Heart right ventricle (tissue), 16 donors: ENCODE measurements at regions of chr1 and their contacts with region 1.

Region 1: DNA sequence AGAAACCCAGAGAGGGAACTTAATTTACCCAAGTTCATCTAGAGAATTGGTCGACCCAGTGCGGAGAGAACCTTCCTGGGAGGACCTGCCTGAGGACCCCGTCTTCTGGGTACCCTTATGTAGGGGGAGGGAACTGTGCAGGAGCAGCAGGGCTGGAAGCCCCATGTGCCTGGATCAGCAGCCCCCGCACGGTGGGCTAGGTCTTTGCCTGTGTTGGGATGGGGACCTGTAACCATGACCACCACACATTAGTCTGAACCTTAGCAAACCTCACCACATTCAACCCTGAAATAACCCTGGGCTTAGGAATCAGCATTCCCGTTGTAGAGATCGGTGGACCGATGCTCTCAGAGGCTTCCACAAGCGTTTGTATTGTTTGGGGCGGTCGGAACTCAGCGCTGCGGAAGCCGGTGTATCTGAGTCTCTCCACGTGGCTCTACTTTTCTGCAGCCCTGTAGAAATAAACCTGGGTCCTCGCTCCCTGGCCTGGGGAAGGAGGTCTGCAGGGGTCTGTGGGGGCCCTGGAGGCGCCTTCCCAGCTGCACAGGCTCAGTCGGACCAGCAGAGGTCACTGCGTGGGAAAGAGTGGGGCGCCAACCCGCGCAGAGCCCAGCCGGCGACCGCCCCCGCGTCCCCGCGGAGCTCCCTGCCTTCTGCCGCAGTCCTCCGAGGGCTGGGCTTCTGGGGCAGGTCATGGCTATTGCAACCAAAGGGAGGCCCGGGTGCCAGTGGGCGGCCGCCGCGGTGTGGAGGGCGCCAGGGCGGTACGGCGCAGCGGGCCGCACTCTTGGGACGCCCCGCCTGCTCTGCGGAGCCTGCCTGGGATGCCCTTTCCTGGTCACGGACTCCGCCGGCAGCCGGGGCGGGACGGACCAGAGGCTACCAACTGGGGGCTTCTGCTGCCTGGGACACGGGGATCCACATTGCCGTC is 36.2 kb upstream of the KCNA10 start:
- DNase-seq: peak; percentile 44 to 65
- ATAC-seq: peak; percentile 81 to 93 (median 84)
- H3K4me3 ChIP-seq: peak overlapping the region in 9 of 10 donors; percentile 12 to 55 (median 52)
- H3K27ac ChIP-seq: peak overlapping the region in 3 of 10 donors; percentile 2 to 56 (median 23)
- H3K4me1 ChIP-seq: peaks cover 0 to 24% (median 12%) of the 10 kb centered on the region in 9 donors
- H3K27me3 ChIP-seq: peaks cover 0 to 69% (median 43%) of the 10 kb centered on the region in 7 donors
- CTCF ChIP-seq: peak; percentile 44 to 89 (median 79)

Region 2: DNA sequence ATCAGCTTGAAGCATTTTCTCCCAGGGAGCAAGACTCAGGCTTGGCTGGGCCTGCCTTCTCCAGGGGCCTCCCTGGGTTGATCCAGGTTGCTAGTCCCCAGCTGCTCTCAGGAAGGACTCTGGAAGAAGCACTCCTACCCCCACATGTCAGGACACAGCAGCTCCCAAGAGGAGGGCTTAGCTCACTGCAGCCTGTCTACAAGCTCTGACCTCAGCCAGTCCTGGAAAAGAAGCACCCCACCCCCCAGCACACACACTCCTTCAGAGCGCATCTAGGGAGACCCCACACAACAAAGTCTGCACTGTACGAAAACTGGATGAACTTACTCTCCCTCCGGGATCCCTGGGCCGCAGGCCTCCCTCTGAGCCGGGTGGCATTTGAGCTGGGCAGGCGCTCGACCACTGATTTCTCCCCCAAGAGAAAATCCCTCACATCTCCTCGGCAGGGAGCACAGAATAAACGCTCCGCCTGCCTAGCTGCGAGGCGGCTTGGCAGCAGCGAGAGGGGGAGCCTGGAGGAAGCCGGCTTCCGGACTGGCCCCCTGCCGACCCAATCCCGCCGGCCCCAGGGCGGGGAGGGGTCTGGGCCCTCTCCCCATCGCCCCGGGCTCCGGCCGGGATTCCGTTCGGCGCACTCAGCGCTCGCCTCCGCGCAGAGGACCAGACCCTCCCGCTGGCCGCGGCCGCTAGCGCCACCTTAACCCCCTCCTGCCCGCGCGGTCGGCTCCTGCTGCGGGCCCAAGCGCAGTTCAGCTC is 50.9 kb after region 1 on chr1 and contains the start of gene KCNA2:
- intact Hi-C with region 1: loop called in 3 of 10 experiments (anchors 5 to 10 kb)
- DNase-seq: peak; percentile 55 to 61
- ATAC-seq: peak; percentile 69 to 82 (median 78)
- H3K4me3 ChIP-seq: peak within 1 kb of the TSS; percentile 54 to 68 (median 58)
- H3K27ac ChIP-seq: peak within 1 kb of the TSS in 7 of 10 donors; percentile 13 to 55 (median 36)
- H3K4me1 ChIP-seq: peaks cover 10 to 34% (median 22%) of the 10 kb centered on the region in 9 donors
- H3K27me3 ChIP-seq: peaks cover 11 to 93% (median 66%) of the 10 kb centered on the region in 7 donors
- CTCF ChIP-seq: no peak
- total RNA-seq, gene KCNA2: 0.47 to 1.6 (median 0.80) TPM

Region 3: GRCh38 chr1:110612065-110612751 is 57.1 kb after region 1 on chr1:
- intact Hi-C with region 1: loop called (anchors 1 to 10 kb)
- DNase-seq: no peak
- ATAC-seq: no peak
- H3K4me3 ChIP-seq: no peak overlapping the region
- H3K27ac ChIP-seq: no peak overlapping the region
- H3K4me1 ChIP-seq: peaks cover 0 to 7% (median 5%) of the 10 kb centered on the region in 9 donors
- H3K27me3 ChIP-seq: peaks cover 7 to 78% (median 62%) of the 10 kb centered on the region in 7 donors
- CTCF ChIP-seq: no peak

Region 4: DNA sequence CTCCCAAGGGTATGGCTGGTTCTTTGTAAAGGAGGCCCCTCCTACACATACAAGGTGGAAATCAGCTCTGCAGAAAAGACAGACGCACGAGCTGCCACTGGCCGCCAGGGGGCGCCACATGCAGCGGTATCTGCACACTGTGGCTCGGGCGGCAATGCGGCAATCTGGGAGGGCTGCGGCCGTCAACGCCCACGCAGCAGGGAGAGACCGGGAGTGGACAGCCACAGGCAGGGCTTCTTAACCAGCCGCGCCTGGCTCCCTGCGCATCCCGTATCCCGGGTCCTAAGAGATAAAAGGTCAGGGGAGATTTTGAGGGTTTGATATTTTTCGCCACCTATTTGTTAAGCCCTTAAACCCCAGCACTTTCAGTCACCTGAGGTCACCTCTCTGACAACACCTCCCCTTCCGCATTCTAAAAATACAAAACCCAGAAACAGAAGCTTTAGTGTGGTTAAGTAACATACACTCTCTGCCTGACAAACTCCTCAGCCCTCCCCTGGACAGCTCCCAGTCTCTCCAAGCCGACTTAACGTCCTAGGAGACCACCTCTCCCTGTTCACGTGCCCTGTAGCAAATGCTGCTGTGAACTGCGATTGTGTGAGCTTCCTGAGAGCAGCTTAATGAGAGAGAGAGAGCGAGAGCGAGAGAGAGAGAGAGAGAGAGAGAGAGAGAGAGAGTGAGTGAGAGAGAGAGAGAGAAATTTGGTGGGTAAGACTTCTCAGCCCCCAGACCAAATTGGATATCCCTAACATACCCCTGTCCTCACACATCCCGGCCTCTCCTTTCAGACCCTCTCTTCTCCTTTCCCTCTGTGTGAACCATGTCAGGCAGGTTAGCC is 64.5 kb after region 1 on chr1:
- intact Hi-C with region 1: loop called in 9 of 10 experiments (anchors 1 to 10 kb)
- DNase-seq: peak; percentile 83
- ATAC-seq: peak; percentile 76 to 95 (median 91)
- H3K4me3 ChIP-seq: peak overlapping the region in 3 of 10 donors; percentile 1 to 46 (median 15)
- H3K27ac ChIP-seq: peak overlapping the region in 1 of 10 donors; percentile 52
- H3K4me1 ChIP-seq: peaks cover 0 to 11% (median 9%) of the 10 kb centered on the region in 9 donors
- H3K27me3 ChIP-seq: peaks cover 3 to 51% (median 41%) of the 10 kb centered on the region in 7 donors
- CTCF ChIP-seq: peak; percentile 90 to 97 (median 95)

Region 5: GRCh38 chr1:110780600-110781484 is 225.7 kb after region 1 on chr1:
- intact Hi-C with region 1: loop called in 5 of 10 experiments (anchors 5 to 10 kb)
- DNase-seq: peak; percentile 38 to 54
- ATAC-seq: peak; percentile 43 to 72 (median 60)
- H3K4me3 ChIP-seq: no peak overlapping the region
- H3K27ac ChIP-seq: no peak overlapping the region
- H3K4me1 ChIP-seq: peaks cover 0 to 35% (median 3%) of the 10 kb centered on the region in 9 donors
- H3K27me3 ChIP-seq: peaks cover 0 to 31% (median 11%) of the 10 kb centered on the region in 7 donors
- CTCF ChIP-seq: peak; percentile 72 to 93 (median 88)